ENCODE measurements at regions of chr3 and their contacts with region 1.

Region 1: GRCh38 chr3:183385698-183386613 is 42.5 kb downstream of the MCF2L2 start:
- DNase-seq: peak; percentile 60
- H3K4me3 Mint-ChIP-seq: no peak overlapping the region
- H3K27ac Mint-ChIP-seq: no peak overlapping the region
- H3K4me1 Mint-ChIP-seq: peaks cover 3% of the 10 kb centered on the region
- H3K27me3 Mint-ChIP-seq: no peaks in the 10 kb centered on the region

Region 2: GRCh38 chr3:183122257-183122932 is 263.6 kb before region 1 on chr3:
- CTCF ChIA-PET with region 1: interaction called, 103 read pairs
- POLR2A ChIA-PET with region 1: no interaction called
- DNase-seq: no peak
- H3K4me3 Mint-ChIP-seq: no peak overlapping the region
- H3K27ac Mint-ChIP-seq: no peak overlapping the region
- H3K4me1 Mint-ChIP-seq: peaks cover 2% of the 10 kb centered on the region
- H3K27me3 Mint-ChIP-seq: peaks cover 3% of the 10 kb centered on the region

Region 3: GRCh38 chr3:183185696-183186095 is 200.3 kb before region 1 on chr3:
- CTCF ChIA-PET with region 1: interaction called, 96 read pairs
- POLR2A ChIA-PET with region 1: no interaction called
- DNase-seq: no peak
- H3K4me3 Mint-ChIP-seq: no peak overlapping the region
- H3K27ac Mint-ChIP-seq: no peak overlapping the region
- H3K4me1 Mint-ChIP-seq: peaks cover 5% of the 10 kb centered on the region
- H3K27me3 Mint-ChIP-seq: peaks cover under 1% of the 10 kb centered on the region